ENCODE measurements at regions of chr11 and their contacts with region 1.

Region 1: GRCh38 chr11:11841723-11842420 is at the start of gene USP47:
- DNase-seq: peak; percentile 90 to 98 (median 94)
- ATAC-seq: peak; percentile 79
- H3K4me3 ChIP-seq: peak within 1 kb of the TSS; percentile 77 to 92
- H3K4me3 Mint-ChIP-seq: no peak within 1 kb of the TSS
- H3K27ac ChIP-seq: peak within 1 kb of the TSS; percentile 92 to 95
- H3K27ac Mint-ChIP-seq: no peak within 1 kb of the TSS
- H3K4me1 ChIP-seq: peaks cover 37% of the 10 kb centered on the region
- H3K4me1 Mint-ChIP-seq: peaks cover 26% of the 10 kb centered on the region
- H3K27me3 ChIP-seq: no peaks in the 10 kb centered on the region
- H3K27me3 Mint-ChIP-seq: peaks cover 6% of the 10 kb centered on the region
- CTCF ChIP-seq: peak; percentile 46
- total RNA-seq, gene USP47: 93.4 to 100 TPM

Region 2: DNA sequence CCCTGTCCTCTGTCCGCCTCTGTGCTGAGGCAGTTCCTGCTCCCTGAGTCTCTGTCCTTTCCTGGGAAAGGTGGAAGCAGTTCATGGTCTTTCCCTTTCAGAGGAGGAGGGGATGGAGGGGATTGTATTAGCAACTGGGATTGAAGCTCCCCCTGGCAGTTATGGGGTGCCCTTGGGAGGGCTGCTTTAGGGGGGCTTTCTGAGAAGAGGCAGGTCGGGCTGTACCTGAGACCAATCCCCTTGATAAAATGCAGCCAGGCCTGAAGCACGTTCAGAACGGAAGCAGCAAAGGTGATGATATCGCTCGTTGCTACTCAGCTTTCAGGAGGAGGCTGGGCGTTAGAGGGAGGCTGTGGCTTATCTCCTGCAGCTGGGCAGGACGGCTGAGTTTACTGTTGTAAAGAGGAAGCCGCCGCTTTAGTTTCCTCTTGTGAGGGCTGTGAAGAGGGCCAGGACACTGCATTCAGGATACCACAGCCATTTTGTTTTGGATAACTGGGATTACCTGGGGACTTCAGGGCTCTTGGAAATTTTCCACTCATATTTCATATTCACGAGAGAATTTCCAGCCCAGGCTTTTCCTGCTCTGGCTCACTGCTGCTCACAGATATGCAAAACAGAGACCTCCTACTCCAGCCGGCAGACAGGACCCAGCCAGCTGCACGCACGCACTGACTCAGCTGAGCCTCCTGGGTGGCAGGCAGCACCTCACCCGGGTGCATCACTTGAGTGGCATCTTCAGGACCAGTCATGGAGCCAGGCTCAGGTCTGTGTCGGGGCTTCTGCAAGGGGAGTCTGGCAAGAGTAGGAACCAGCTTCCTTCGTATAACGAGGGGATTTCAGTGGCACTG is 1386.0 kb before region 1 on chr11:
- CTCF ChIA-PET with region 1: no interaction called
- POLR2A ChIA-PET with region 1: interaction called, 4 read pairs
- intact Hi-C with region 1: loop called (anchors 10 kb)
- DNase-seq: peak; percentile 30 to 87 (median 74)
- ATAC-seq: peak; percentile 74
- H3K4me3 ChIP-seq: peak overlapping the region; percentile 52 to 54
- H3K4me3 Mint-ChIP-seq: peak overlapping the region; percentile 91
- H3K27ac ChIP-seq: peak overlapping the region; percentile 10 to 67
- H3K27ac Mint-ChIP-seq: peak overlapping the region; percentile 98
- H3K4me1 ChIP-seq: peaks cover 58% of the 10 kb centered on the region
- H3K4me1 Mint-ChIP-seq: peaks cover 81% of the 10 kb centered on the region
- H3K27me3 ChIP-seq: no peaks in the 10 kb centered on the region
- H3K27me3 Mint-ChIP-seq: no peaks in the 10 kb centered on the region
- CTCF ChIP-seq: no peak

Region 3: GRCh38 chr11:11148104-11148509 is 693.8 kb before region 1 on chr11:
- CTCF ChIA-PET with region 1: no interaction called
- POLR2A ChIA-PET with region 1: no interaction called
- intact Hi-C with region 1: loop called (anchors 5 kb)
- DNase-seq: peak in 4 of 9 experiments; percentile 26 to 52 (median 38)
- ATAC-seq: no peak
- H3K4me3 ChIP-seq: no peak overlapping the region
- H3K4me3 Mint-ChIP-seq: no peak overlapping the region
- H3K27ac ChIP-seq: no peak overlapping the region
- H3K27ac Mint-ChIP-seq: peak overlapping the region; percentile 79
- H3K4me1 ChIP-seq: peaks cover 42% of the 10 kb centered on the region
- H3K4me1 Mint-ChIP-seq: peaks cover 42% of the 10 kb centered on the region
- H3K27me3 ChIP-seq: no peaks in the 10 kb centered on the region
- H3K27me3 Mint-ChIP-seq: no peaks in the 10 kb centered on the region
- CTCF ChIP-seq: no peak

Region 4: DNA sequence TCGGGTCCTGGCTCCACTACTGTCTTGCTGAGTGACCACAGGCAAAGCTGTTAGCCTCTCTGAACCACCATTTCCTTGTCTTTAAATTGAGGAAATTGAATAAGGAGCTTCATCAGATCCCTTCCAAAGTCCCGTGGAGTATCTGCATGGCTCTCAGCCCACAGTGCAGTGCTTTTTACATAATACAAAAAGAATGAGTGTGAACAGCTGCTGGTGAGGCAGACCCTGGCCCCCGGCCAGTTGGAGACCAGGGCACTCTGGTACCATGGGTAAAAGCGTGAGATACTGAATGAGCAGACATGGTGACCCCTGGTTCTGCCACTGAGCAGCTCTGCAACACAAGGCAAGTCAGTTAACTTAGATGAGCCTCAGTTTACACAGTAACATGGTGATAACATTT is 306.9 kb before region 1 on chr11:
- CTCF ChIA-PET with region 1: no interaction called
- POLR2A ChIA-PET with region 1: no interaction called
- intact Hi-C with region 1: no loop called
- DNase-seq: no peak
- ATAC-seq: no peak
- H3K4me3 ChIP-seq: no peak overlapping the region
- H3K4me3 Mint-ChIP-seq: no peak overlapping the region
- H3K27ac ChIP-seq: no peak overlapping the region
- H3K27ac Mint-ChIP-seq: no peak overlapping the region
- H3K4me1 ChIP-seq: no peaks in the 10 kb centered on the region
- H3K4me1 Mint-ChIP-seq: no peaks in the 10 kb centered on the region
- H3K27me3 ChIP-seq: no peaks in the 10 kb centered on the region
- H3K27me3 Mint-ChIP-seq: peaks cover 2% of the 10 kb centered on the region
- CTCF ChIP-seq: no peak

Region 5: DNA sequence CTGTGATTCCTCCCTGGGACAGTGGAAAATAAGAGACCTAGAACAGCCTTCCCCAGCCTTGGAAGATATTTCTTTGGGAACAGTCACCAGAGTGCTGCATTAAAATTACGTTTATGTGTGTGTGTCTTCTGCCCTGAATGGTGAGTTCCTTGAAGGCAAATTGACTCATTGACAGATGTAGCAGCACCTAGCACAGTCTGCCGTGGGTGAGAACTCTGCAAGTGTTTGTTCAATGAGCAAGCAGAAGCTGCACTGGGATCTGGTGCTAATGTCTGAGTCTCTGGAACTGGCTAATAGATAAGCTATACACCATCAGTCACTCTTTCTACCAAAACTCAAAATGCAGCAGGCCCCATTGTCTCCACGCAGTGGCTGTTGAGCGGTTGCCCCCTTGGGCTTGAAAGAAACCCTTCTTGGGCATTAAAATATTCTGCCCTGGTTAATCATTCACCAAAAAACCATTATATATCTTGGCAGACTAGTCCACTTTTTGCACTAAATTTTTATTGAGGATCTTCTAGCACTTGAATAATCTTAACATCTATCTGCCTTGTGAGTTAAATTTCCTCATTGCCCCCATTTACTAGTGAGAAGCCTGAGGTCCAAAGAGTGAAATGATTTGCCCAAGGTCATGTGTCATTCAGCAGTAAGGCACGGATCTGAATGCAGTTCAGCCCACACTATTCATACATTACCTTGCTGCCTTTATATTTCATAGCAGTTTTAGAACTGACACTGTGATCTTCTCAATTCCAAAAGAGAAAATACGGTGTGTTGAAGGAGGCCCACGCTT is 132.2 kb before region 1 on chr11:
- CTCF ChIA-PET with region 1: no interaction called
- POLR2A ChIA-PET with region 1: no interaction called
- intact Hi-C with region 1: no loop called
- DNase-seq: no peak
- ATAC-seq: no peak
- H3K4me3 ChIP-seq: no peak overlapping the region
- H3K4me3 Mint-ChIP-seq: no peak overlapping the region
- H3K27ac ChIP-seq: no peak overlapping the region
- H3K27ac Mint-ChIP-seq: no peak overlapping the region
- H3K4me1 ChIP-seq: no peaks in the 10 kb centered on the region
- H3K4me1 Mint-ChIP-seq: no peaks in the 10 kb centered on the region
- H3K27me3 ChIP-seq: no peaks in the 10 kb centered on the region
- H3K27me3 Mint-ChIP-seq: peaks cover 9% of the 10 kb centered on the region
- CTCF ChIP-seq: no peak

Region 6: DNA sequence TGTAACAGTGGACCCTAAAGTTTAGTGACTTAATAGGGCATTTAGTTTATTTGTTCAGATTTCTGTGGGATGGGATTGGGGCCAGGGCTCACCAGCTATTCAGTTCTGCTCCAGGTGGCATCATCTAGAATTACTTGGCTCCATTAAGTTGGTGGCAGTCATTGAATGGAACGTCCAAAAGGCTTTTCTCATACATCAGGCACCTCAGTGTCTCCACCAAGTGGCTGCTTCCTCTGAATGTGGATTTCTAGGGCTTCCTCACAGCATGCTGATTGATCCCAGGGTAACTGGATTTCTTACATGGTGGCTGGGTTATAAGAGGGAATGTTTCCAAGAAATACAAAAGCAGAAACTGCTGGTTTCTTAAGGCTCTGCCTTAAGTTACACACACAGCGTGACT is 34.6 kb after region 1 on chr11:
- CTCF ChIA-PET with region 1: interaction called, 4 read pairs
- POLR2A ChIA-PET with region 1: interaction called, 4 read pairs
- intact Hi-C with region 1: loop called in 1 of 2 experiments (anchors 5 kb)
- DNase-seq: peak in 2 of 9 experiments; percentile 17 to 40
- ATAC-seq: no peak
- H3K4me3 ChIP-seq: no peak overlapping the region
- H3K4me3 Mint-ChIP-seq: no peak overlapping the region
- H3K27ac ChIP-seq: no peak overlapping the region
- H3K27ac Mint-ChIP-seq: no peak overlapping the region
- H3K4me1 ChIP-seq: peaks cover 22% of the 10 kb centered on the region
- H3K4me1 Mint-ChIP-seq: peaks cover 64% of the 10 kb centered on the region
- H3K27me3 ChIP-seq: no peaks in the 10 kb centered on the region
- H3K27me3 Mint-ChIP-seq: no peaks in the 10 kb centered on the region
- CTCF ChIP-seq: no peak

Region 7: GRCh38 chr11:13276832-13277767 is 1435.2 kb after region 1 on chr11:
- CTCF ChIA-PET with region 1: no interaction called
- POLR2A ChIA-PET with region 1: no interaction called
- intact Hi-C with region 1: loop called (anchors 5 to 10 kb)
- DNase-seq: peak; percentile 95 to 98 (median 96)
- ATAC-seq: peak; percentile 80
- H3K4me3 ChIP-seq: peak overlapping the region; percentile 96 to 98
- H3K4me3 Mint-ChIP-seq: peak overlapping the region; percentile 96
- H3K27ac ChIP-seq: peak overlapping the region; percentile 56 to 82
- H3K27ac Mint-ChIP-seq: peak overlapping the region; percentile 92
- H3K4me1 ChIP-seq: peaks cover 34% of the 10 kb centered on the region
- H3K4me1 Mint-ChIP-seq: peaks cover 41% of the 10 kb centered on the region
- H3K27me3 ChIP-seq: no peaks in the 10 kb centered on the region
- H3K27me3 Mint-ChIP-seq: no peaks in the 10 kb centered on the region
- CTCF ChIP-seq: no peak

Region 8: GRCh38 chr11:13668102-13668956 is 1826.5 kb after region 1 on chr11 and contains the start of gene FAR1:
- CTCF ChIA-PET with region 1: no interaction called
- POLR2A ChIA-PET with region 1: no interaction called
- intact Hi-C with region 1: loop called in 1 of 2 experiments (anchors 5 kb)
- DNase-seq: peak; percentile 92 to 98 (median 95)
- ATAC-seq: peak; percentile 89
- H3K4me3 ChIP-seq: peak within 1 kb of the TSS; percentile 76 to 81
- H3K4me3 Mint-ChIP-seq: peak within 1 kb of the TSS; percentile 98
- H3K27ac ChIP-seq: peak within 1 kb of the TSS; percentile 66 to 69
- H3K27ac Mint-ChIP-seq: peak within 1 kb of the TSS; percentile 96
- H3K4me1 ChIP-seq: peaks cover 14% of the 10 kb centered on the region
- H3K4me1 Mint-ChIP-seq: peaks cover 45% of the 10 kb centered on the region
- H3K27me3 ChIP-seq: no peaks in the 10 kb centered on the region
- H3K27me3 Mint-ChIP-seq: peaks cover 5% of the 10 kb centered on the region
- CTCF ChIP-seq: peak; percentile 70
- total RNA-seq, gene FAR1: 29.8 to 34.0 TPM